MCF 10A (cell line): ENCODE measurements at regions of chr5 and their contacts with region 1.

Region 1: GRCh38 chr5:88729084-88729828 is 153.7 kb downstream of the MEF2C start:
- DNase-seq: peak; percentile 73
- H3K4me3 Mint-ChIP-seq: no peak overlapping the region
- H3K27ac Mint-ChIP-seq: no peak overlapping the region
- H3K4me1 Mint-ChIP-seq: no peaks in the 10 kb centered on the region
- H3K27me3 Mint-ChIP-seq: peaks cover 70% of the 10 kb centered on the region
- CTCF ChIP-seq: peak; percentile 59

Region 2: GRCh38 chr5:88740604-88741187 is 11.4 kb after region 1 on chr5:
- CTCF ChIA-PET with region 1: interaction called, 21 read pairs
- POLR2A ChIA-PET with region 1: no interaction called
- intact Hi-C with region 1: no loop called
- DNase-seq: no peak
- H3K4me3 Mint-ChIP-seq: no peak overlapping the region
- H3K27ac Mint-ChIP-seq: no peak overlapping the region
- H3K4me1 Mint-ChIP-seq: no peaks in the 10 kb centered on the region
- H3K27me3 Mint-ChIP-seq: peaks cover 70% of the 10 kb centered on the region
- CTCF ChIP-seq: no peak

Region 3: GRCh38 chr5:89255845-89256463 is 526.7 kb after region 1 on chr5:
- CTCF ChIA-PET with region 1: interaction called, 4 read pairs
- POLR2A ChIA-PET with region 1: no interaction called
- intact Hi-C with region 1: loop called (anchors 5 kb)
- DNase-seq: peak; percentile 43
- H3K4me3 Mint-ChIP-seq: no peak overlapping the region
- H3K27ac Mint-ChIP-seq: no peak overlapping the region
- H3K4me1 Mint-ChIP-seq: no peaks in the 10 kb centered on the region
- H3K27me3 Mint-ChIP-seq: no peaks in the 10 kb centered on the region
- CTCF ChIP-seq: no peak

Region 4: DNA sequence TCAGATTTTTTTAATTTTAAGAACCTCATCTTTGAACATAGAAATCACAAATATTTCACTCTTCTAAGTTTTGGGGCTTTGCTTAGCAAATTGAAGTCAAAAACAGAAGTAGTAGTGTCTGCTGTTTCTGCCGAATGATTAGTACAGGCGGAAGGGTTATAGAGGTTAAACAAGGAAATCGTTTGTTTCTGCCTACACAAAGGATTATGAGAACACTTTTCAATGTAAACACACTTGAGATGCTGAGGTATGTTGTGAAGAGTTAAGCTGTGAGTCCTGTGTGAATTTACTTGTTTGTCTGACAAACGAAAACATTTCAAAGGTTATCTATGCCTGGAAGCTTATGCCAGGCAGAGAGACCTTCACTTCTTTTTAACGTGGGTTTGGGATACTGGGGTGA is 1455.5 kb after region 1 on chr5:
- CTCF ChIA-PET with region 1: interaction called, 20 read pairs
- POLR2A ChIA-PET with region 1: interaction called, 3 read pairs
- intact Hi-C with region 1: loop called (anchors 2 kb)
- DNase-seq: no peak
- H3K4me3 Mint-ChIP-seq: no peak overlapping the region
- H3K27ac Mint-ChIP-seq: no peak overlapping the region
- H3K4me1 Mint-ChIP-seq: peaks cover 6% of the 10 kb centered on the region
- H3K27me3 Mint-ChIP-seq: no peaks in the 10 kb centered on the region
- CTCF ChIP-seq: no peak

Region 5: GRCh38 chr5:90264689-90265544 is 1535.7 kb after region 1 on chr5:
- CTCF ChIA-PET with region 1: interaction called, 114 read pairs
- POLR2A ChIA-PET with region 1: no interaction called
- intact Hi-C with region 1: loop called (anchors 1 kb)
- DNase-seq: peak; percentile 67
- H3K4me3 Mint-ChIP-seq: no peak overlapping the region
- H3K27ac Mint-ChIP-seq: no peak overlapping the region
- H3K4me1 Mint-ChIP-seq: no peaks in the 10 kb centered on the region
- H3K27me3 Mint-ChIP-seq: peaks cover 38% of the 10 kb centered on the region
- CTCF ChIP-seq: peak; percentile 85